A673 (cell line): ENCODE measurements at regions of chr19 and their contacts with region 1.

Region 1: DNA sequence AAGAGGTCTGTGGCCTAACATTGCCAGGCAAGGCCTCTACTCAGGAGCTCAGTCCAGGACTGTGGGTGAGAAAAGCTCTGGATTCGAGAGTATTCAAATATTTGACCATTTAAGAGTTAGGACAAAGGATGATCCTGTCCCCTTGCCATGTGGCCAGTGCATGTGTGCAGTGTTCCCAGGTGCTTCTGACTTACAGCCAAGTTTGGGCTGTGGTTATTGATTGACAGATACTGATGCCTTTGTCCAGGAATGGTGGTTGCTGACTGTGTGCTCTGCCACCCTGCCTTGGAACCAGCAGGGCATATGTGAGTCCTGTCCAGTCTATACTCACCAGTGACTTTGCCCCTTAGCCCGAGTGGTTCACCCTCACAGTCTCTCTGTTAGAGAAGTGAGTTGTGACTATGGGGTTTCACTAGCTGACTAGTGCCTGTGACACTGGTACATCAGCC is 51.9 kb downstream of the GARRE1 start:
- DNase-seq: no peak
- H3K4me3 ChIP-seq: no peak overlapping the region
- H3K27ac ChIP-seq: peak overlapping the region; percentile 33
- H3K4me1 ChIP-seq: peaks cover 26% of the 10 kb centered on the region
- H3K27me3 ChIP-seq: no peaks in the 10 kb centered on the region
- CTCF ChIP-seq: no peak

Region 2: GRCh38 chr19:34254552-34255432 is 51.4 kb before region 1 on chr19 and contains the start of gene GARRE1:
- CTCF ChIA-PET with region 1: no interaction called
- POLR2A ChIA-PET with region 1: interaction called, 28 read pairs
- intact Hi-C with region 1: no loop called
- DNase-seq: peak; percentile 81
- H3K4me3 ChIP-seq: peak within 1 kb of the TSS; percentile 93
- H3K27ac ChIP-seq: peak within 1 kb of the TSS; percentile 93
- H3K4me1 ChIP-seq: peaks cover 19% of the 10 kb centered on the region
- H3K27me3 ChIP-seq: no peaks in the 10 kb centered on the region
- CTCF ChIP-seq: no peak
- total RNA-seq, gene GARRE1: 21.0 and 22.9 TPM in 2 replicates

Region 3: GRCh38 chr19:34278783-34279182 is 27.5 kb before region 1 on chr19:
- CTCF ChIA-PET with region 1: no interaction called
- POLR2A ChIA-PET with region 1: interaction called, 18 read pairs
- intact Hi-C with region 1: no loop called
- DNase-seq: no peak
- H3K4me3 ChIP-seq: no peak overlapping the region
- H3K27ac ChIP-seq: no peak overlapping the region
- H3K4me1 ChIP-seq: peaks cover 23% of the 10 kb centered on the region
- H3K27me3 ChIP-seq: no peaks in the 10 kb centered on the region
- CTCF ChIP-seq: no peak

Region 4: GRCh38 chr19:34461375-34462100 is 155.3 kb after region 1 on chr19:
- CTCF ChIA-PET with region 1: no interaction called
- POLR2A ChIA-PET with region 1: no interaction called
- intact Hi-C with region 1: no loop called
- DNase-seq: no peak
- H3K4me3 ChIP-seq: no peak overlapping the region
- H3K27ac ChIP-seq: no peak overlapping the region
- H3K4me1 ChIP-seq: no peaks in the 10 kb centered on the region
- H3K27me3 ChIP-seq: no peaks in the 10 kb centered on the region
- CTCF ChIP-seq: no peak

Region 5: GRCh38 chr19:35006342-35007018 is 700.2 kb after region 1 on chr19:
- CTCF ChIA-PET with region 1: no interaction called
- POLR2A ChIA-PET with region 1: no interaction called
- intact Hi-C with region 1: no loop called
- DNase-seq: no peak
- H3K4me3 ChIP-seq: no peak overlapping the region
- H3K27ac ChIP-seq: no peak overlapping the region
- H3K4me1 ChIP-seq: peaks cover 7% of the 10 kb centered on the region
- H3K27me3 ChIP-seq: no peaks in the 10 kb centered on the region
- CTCF ChIP-seq: no peak